Dorsolateral prefrontal cortex (tissue), 120 donors: ENCODE measurements at regions of chr6 and their contacts with region 1.

Region 1: GRCh38 chr6:79777713-79778579 is 146.8 kb downstream of the SH3BGRL2 start:
- DNase-seq: peak; percentile 54 to 87 (median 74)
- H3K4me3 ChIP-seq: peak overlapping the region; percentile 13 to 67 (median 47)
- H3K27ac ChIP-seq: peak overlapping the region in 25 of 59 donors; percentile 2 to 64 (median 39)
- H3K27me3 ChIP-seq: no peaks in the 10 kb centered on the region
- CTCF ChIP-seq: peak; percentile 85 to 100 (median 98)

Region 2: GRCh38 chr6:79737172-79737571 is 40.8 kb before region 1 on chr6:
- intact Hi-C with region 1: no loop called
- DNase-seq: peak in 2 of 10 donors; percentile 21 to 28
- H3K4me3 ChIP-seq: peak overlapping the region in 49 of 59 donors; percentile 1 to 52 (median 28)
- H3K27ac ChIP-seq: peak overlapping the region in 33 of 59 donors; percentile 1 to 70 (median 38)
- H3K27me3 ChIP-seq: no peaks in the 10 kb centered on the region
- CTCF ChIP-seq: no peak

Region 3: DNA sequence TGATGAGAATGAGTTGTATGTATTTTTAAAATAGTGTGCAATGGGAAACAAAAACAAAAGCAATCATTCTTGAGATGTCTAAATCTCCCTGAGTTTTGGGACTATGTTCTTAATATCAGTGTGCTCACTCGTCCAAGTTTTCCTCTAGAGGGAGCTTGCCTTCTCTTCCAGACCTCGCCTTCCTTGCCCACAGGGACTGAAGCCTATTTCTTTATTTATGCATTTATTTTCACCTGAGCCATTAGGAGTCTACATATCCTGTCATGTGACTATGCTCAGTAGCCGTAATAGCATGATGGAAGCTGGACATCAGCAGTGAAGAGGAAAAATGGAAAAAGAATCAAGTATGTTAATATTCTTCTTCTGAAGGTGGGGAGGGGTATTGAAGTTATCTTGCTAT is 15.6 kb before region 1 on chr6:
- intact Hi-C with region 1: no loop called
- DNase-seq: no peak
- H3K4me3 ChIP-seq: no peak overlapping the region
- H3K27ac ChIP-seq: no peak overlapping the region
- H3K27me3 ChIP-seq: peaks cover 0 to 1% (median 0%) of the 10 kb centered on the region in 45 donors
- CTCF ChIP-seq: peak in 1 of 56 donors; percentile 12

Region 4: DNA sequence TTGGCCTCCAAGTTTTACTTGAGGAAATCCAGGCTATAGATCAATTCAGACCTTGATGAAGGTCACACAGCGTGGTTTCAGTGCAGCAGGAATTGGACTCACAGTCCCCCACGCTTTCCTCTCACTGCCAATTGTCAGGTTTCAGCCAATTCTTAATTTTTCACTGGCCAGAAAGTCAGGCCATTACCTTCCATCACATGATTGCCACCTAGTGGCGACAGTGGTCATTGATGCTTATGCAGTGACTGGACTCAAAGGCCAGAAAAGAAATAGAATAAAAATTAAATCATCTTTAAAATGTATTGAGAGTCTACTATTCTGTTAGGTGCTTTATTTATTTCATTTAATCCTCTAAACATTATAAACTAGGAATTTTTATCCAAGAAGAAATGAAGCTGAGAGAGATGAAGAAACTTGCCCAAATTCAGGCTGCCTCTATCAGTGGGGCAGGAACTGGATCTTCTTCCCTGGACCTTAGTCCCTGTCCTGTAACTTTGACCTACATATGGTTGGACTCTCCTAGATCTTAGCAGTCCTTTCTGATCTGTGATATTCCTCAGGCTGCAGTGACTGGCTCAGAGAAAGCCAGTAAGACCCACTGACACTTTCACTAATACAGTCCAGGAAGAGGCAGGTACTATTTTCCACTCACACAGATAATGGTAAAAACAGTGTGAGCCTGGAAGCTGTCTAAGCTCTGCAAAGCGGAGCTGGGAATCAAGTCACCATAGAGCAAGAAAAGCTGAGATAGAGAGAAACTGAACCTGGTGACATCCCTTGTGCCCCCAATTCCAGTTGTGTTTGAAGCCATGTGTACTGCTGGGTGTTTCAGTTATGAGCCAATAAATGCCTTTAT is 36.1 kb after region 1 on chr6:
- intact Hi-C with region 1: loop called (anchors 1 to 2 kb)
- DNase-seq: peak; percentile 40 to 88 (median 77)
- H3K4me3 ChIP-seq: no peak overlapping the region
- H3K27ac ChIP-seq: peak overlapping the region in 14 of 59 donors; percentile 3 to 71 (median 18)
- H3K27me3 ChIP-seq: no peaks in the 10 kb centered on the region
- CTCF ChIP-seq: peak; percentile 80 to 97 (median 89)

Region 5: DNA sequence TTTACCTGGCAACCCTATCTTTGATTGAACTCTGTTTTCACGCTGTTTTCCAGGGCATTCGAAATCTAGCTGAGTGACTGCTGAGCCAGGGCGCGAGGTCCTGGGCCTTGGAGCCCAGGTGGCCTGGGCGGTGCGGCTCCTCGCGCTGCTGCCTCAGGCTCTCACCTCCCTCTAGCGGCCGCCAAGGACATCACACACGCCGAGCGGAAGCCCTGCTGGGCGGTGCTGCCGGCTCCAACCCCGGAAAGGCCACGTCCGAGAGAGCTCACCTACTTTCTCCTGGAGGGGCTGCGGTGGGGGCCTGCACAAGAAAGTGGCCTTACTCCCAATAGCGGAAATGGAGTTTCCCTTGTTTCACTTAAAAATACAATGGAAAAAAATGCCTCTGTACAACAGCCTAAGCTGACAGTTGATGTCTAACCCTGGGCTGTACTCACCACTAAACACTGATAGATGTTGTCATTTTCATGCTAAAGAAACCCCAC is 91.7 kb after region 1 on chr6:
- intact Hi-C with region 1: loop called (anchors 2 kb)
- DNase-seq: peak; percentile 49 to 87 (median 70)
- H3K4me3 ChIP-seq: peak overlapping the region in 57 of 59 donors; percentile 8 to 65 (median 41)
- H3K27ac ChIP-seq: peak overlapping the region in 2 of 59 donors; percentile 25 to 44
- H3K27me3 ChIP-seq: peaks cover 0 to 3% (median 0%) of the 10 kb centered on the region in 45 donors
- CTCF ChIP-seq: peak; percentile 49 to 97 (median 91)

Region 6: GRCh38 chr6:80094017-80094416 is 316.1 kb after region 1 on chr6:
- intact Hi-C with region 1: loop called in 1 of 2 experiments (anchors 10 kb)
- DNase-seq: no peak
- H3K4me3 ChIP-seq: no peak overlapping the region
- H3K27ac ChIP-seq: no peak overlapping the region
- H3K27me3 ChIP-seq: no peaks in the 10 kb centered on the region
- CTCF ChIP-seq: peak; percentile 40 to 78 (median 62)